CD8-positive, alpha-beta T cell (primary cell): ENCODE measurements at regions of chr5 and their contacts with region 1.

Region 1: GRCh38 chr5:111618623-111619271 is 106.4 kb upstream of the STARD4 start:
- DNase-seq: no peak
- ATAC-seq: no peak
- H3K4me3 ChIP-seq: no peak overlapping the region
- H3K4me3 Mint-ChIP-seq: no peak overlapping the region
- H3K27ac ChIP-seq: no peak overlapping the region
- H3K27ac Mint-ChIP-seq: no peak overlapping the region
- H3K4me1 ChIP-seq: no peaks in the 10 kb centered on the region
- H3K4me1 Mint-ChIP-seq: no peaks in the 10 kb centered on the region
- H3K27me3 ChIP-seq: no peaks in the 10 kb centered on the region
- H3K27me3 Mint-ChIP-seq: peaks cover 3% of the 10 kb centered on the region
- CTCF ChIP-seq: no peak

Region 2: DNA sequence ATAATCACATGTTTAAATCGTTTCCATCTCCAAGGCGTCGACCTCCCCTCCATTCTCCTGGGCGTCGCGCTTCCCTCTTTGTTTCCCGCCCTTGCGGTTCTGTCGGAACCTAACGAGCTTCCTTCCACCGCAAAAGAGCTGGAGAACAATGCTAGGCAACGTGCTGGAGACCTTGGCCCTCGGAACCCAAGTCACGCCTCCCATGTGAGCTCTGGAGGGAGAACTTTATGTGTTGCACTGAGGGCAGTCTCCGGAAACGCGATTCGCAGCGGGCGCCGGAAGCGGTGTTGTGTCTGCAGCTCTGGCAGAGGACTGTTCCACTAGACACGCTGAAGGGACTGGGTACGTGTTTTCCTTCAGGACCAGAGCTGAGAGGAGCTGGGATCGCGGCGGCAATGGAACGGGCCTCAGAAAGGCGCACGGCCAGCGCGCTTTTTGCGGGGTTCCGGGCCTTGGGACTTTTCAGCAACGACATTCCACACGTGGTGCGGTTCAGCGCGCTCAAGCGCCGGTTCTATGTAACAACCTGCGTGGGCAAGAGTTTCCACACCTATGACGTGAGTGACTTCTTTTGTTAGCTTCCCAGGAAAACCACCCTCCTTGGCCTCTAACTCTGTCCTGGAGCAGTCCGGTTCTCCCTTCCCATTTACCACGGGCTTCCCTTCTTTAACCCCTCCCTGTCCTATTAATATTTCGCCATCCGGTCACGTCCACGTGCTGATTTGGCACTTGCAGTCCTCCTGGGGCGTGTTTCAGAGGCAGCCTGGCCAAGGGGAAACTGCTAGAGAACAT is 526.5 kb before region 1 on chr5 and contains the start of gene WDR36:
- CTCF ChIA-PET with region 1: no interaction called
- POLR2A ChIA-PET with region 1: no interaction called
- intact Hi-C with region 1: no loop called
- DNase-seq: peak; percentile 77 to 94 (median 86)
- ATAC-seq: peak; percentile 92
- H3K4me3 ChIP-seq: peak within 1 kb of the TSS; percentile 96
- H3K4me3 Mint-ChIP-seq: peak within 1 kb of the TSS; percentile 95
- H3K27ac ChIP-seq: peak within 1 kb of the TSS; percentile 86 to 89
- H3K27ac Mint-ChIP-seq: peak within 1 kb of the TSS; percentile 94
- H3K4me1 ChIP-seq: peaks cover 24% of the 10 kb centered on the region
- H3K4me1 Mint-ChIP-seq: peaks cover 38% of the 10 kb centered on the region
- H3K27me3 ChIP-seq: no peaks in the 10 kb centered on the region
- H3K27me3 Mint-ChIP-seq: peaks cover 4% of the 10 kb centered on the region
- CTCF ChIP-seq: no peak
- total RNA-seq, gene WDR36: 29.5 to 32.6 TPM

Region 3: DNA sequence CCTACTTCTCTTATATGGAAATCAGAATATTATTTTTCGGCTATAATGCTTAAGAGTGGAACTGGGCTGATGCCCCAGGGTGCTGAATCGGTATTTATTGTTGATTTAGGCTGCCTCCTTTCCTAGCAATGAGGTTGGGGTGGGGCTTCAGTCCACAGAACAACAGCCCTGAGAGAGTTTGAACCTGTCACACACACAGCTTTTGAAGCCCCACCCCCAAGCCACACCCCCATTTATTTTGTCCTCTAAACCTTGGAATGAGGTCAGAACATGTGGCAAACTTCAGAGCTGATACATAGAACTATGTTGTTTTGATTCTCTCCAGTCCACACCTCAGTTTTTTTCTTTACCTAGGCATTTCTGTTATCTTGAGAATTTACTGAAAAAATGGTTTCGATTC is 446.2 kb before region 1 on chr5:
- CTCF ChIA-PET with region 1: no interaction called
- POLR2A ChIA-PET with region 1: no interaction called
- intact Hi-C with region 1: no loop called
- DNase-seq: peak in 2 of 9 experiments; percentile 3 to 20
- ATAC-seq: no peak
- H3K4me3 ChIP-seq: no peak overlapping the region
- H3K4me3 Mint-ChIP-seq: no peak overlapping the region
- H3K27ac ChIP-seq: no peak overlapping the region
- H3K27ac Mint-ChIP-seq: no peak overlapping the region
- H3K4me1 ChIP-seq: no peaks in the 10 kb centered on the region
- H3K4me1 Mint-ChIP-seq: peaks cover 3% of the 10 kb centered on the region
- H3K27me3 ChIP-seq: no peaks in the 10 kb centered on the region
- H3K27me3 Mint-ChIP-seq: no peaks in the 10 kb centered on the region
- CTCF ChIP-seq: no peak

Region 4: GRCh38 chr5:111454198-111454622 is 164.5 kb before region 1 on chr5:
- CTCF ChIA-PET with region 1: no interaction called
- POLR2A ChIA-PET with region 1: no interaction called
- intact Hi-C with region 1: no loop called
- DNase-seq: no peak
- ATAC-seq: no peak
- H3K4me3 ChIP-seq: no peak overlapping the region
- H3K4me3 Mint-ChIP-seq: no peak overlapping the region
- H3K27ac ChIP-seq: no peak overlapping the region
- H3K27ac Mint-ChIP-seq: peak overlapping the region; percentile 20
- H3K4me1 ChIP-seq: no peaks in the 10 kb centered on the region
- H3K4me1 Mint-ChIP-seq: peaks cover 19% of the 10 kb centered on the region
- H3K27me3 ChIP-seq: no peaks in the 10 kb centered on the region
- H3K27me3 Mint-ChIP-seq: no peaks in the 10 kb centered on the region
- CTCF ChIP-seq: no peak

Region 5: GRCh38 chr5:111596705-111597104 is 22.0 kb before region 1 on chr5:
- CTCF ChIA-PET with region 1: no interaction called
- POLR2A ChIA-PET with region 1: no interaction called
- intact Hi-C with region 1: loop called in 1 of 2 experiments (anchors 1 kb)
- DNase-seq: no peak
- ATAC-seq: no peak
- H3K4me3 ChIP-seq: no peak overlapping the region
- H3K4me3 Mint-ChIP-seq: no peak overlapping the region
- H3K27ac ChIP-seq: no peak overlapping the region
- H3K27ac Mint-ChIP-seq: no peak overlapping the region
- H3K4me1 ChIP-seq: no peaks in the 10 kb centered on the region
- H3K4me1 Mint-ChIP-seq: no peaks in the 10 kb centered on the region
- H3K27me3 ChIP-seq: no peaks in the 10 kb centered on the region
- H3K27me3 Mint-ChIP-seq: peaks cover under 1% of the 10 kb centered on the region
- CTCF ChIP-seq: no peak